ENCODE measurements at regions of chr1 and their contacts with region 1.

Region 1: DNA sequence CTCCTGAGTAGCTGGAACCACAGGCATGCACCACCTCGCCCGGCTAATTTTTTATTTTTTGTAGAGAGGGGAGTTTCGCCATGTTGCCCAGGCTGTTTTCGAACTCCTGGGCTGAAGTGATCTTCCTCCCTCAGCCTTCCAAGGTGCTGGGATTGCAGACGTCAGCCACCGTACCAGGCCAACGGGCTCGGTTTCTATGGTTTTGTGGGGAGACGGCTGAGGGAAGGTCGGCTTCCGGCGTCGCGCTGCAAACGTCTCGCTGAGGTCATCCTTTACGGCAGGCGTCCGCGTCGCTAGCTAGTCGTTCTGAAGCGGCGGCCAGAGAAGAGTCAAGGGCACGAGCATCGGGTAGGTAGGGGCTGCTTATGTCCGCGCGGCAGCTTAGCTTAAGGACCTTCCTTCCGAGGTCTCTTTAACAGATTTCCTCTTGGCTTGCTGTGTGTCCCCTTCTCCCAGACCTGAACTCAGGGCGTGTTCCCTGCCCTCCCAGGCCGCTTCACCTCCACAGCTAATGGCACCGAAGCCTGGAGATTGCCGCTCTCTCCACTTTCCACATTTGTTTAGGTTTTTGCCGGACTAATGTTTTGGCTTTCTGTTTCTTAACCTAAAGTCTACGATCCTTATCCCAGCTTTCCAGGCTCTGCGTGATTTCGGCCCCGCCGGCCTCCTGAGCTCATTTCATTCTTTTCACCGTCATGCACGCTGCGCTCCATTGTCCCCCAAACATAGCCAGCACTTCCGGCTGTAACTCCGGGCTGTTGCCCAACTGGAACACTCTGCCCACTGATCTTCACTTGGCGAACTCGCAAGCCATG is at the start of gene NDUFS5:
- DNase-seq: peak; percentile 95
- ATAC-seq: peak; percentile 96 to 97
- total RNA-seq, gene NDUFS5: 572 to 591 TPM

Region 2: GRCh38 chr1:39081266-39082009 is 55.2 kb after region 1 on chr1:
- intact Hi-C with region 1: loop called in 1 of 2 experiments (anchors 2 kb)
- DNase-seq: no peak
- ATAC-seq: peak; percentile 32 to 40